ENCODE measurements at regions of chr4 and their contacts with region 1.

Region 1: GRCh38 chr4:169485791-169486742 is 126.3 kb downstream of the NEK1 start:
- DNase-seq: peak; percentile 68
- ATAC-seq: peak; percentile 68
- H3K4me3 ChIP-seq: no peak overlapping the region
- H3K27ac ChIP-seq: no peak overlapping the region
- H3K4me1 ChIP-seq: 0 out of 2 replicates have a peak, but pooled peaks cover 5% of the 10 kb centered on the region
- H3K27me3 ChIP-seq: no peaks in the 10 kb centered on the region
- CTCF ChIP-seq: peak; percentile 43 to 82 (median 67); a peak in 5 of 6 replicates
- EP300 ChIP-seq: no peak
- POLR2A ChIP-seq: no peak
- RAD21 ChIP-seq: peak; percentile 97

Region 2: GRCh38 chr4:168917138-168917779 is 568.8 kb before region 1 on chr4:
- CTCF ChIA-PET with region 1: interaction called, 60 read pairs
- POLR2A ChIA-PET with region 1: no interaction called
- RAD21 ChIA-PET with region 1: interaction called, 32 read pairs
- SMC1A ChIA-PET with region 1: interaction called, 53 read pairs
- in situ Hi-C with region 1: loop called (anchors 5 kb)
- intact Hi-C with region 1: no loop called
- DNase-seq: no peak
- ATAC-seq: peak; percentile 80
- H3K4me3 ChIP-seq: no peak overlapping the region
- H3K27ac ChIP-seq: no peak overlapping the region
- H3K4me1 ChIP-seq: no peaks in the 10 kb centered on the region
- H3K27me3 ChIP-seq: no peaks in the 10 kb centered on the region
- CTCF ChIP-seq: peak; percentile 37 to 52 (median 41); a peak in 4 of 6 replicates
- EP300 ChIP-seq: no peak
- POLR2A ChIP-seq: no peak
- RAD21 ChIP-seq: peak; percentile 69

Region 3: DNA sequence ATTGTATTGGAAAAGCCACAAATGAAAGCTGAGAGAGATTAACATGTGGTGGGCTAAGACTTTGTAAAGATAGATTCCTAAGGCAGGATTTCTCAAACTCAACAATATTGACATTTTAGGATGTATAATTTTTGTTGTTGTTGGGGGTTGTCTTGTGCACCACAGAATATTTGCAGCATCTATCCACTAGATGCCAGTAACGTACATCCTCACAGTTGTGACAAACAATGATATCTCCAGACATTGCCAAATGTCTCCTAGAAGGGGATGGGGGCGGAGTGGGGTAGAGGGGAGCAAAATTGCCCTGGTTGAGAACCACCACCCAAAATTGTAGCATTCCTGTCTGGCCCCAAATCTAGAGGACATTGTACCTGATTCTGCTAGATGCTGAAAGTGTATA is 461.3 kb before region 1 on chr4:
- CTCF ChIA-PET with region 1: interaction called, 64 read pairs
- POLR2A ChIA-PET with region 1: no interaction called
- RAD21 ChIA-PET with region 1: interaction called, 42 read pairs
- SMC1A ChIA-PET with region 1: interaction called, 70 read pairs
- in situ Hi-C with region 1: no loop called
- intact Hi-C with region 1: loop called (anchors 1 kb)
- DNase-seq: no peak
- ATAC-seq: peak; percentile 97
- H3K4me3 ChIP-seq: no peak overlapping the region
- H3K27ac ChIP-seq: no peak overlapping the region
- H3K4me1 ChIP-seq: no peaks in the 10 kb centered on the region
- H3K27me3 ChIP-seq: no peaks in the 10 kb centered on the region
- CTCF ChIP-seq: peak; percentile 63 to 77 (median 65)
- EP300 ChIP-seq: no peak
- POLR2A ChIP-seq: no peak
- RAD21 ChIP-seq: peak; percentile 94

Region 4: GRCh38 chr4:169201222-169202144 is 284.6 kb before region 1 on chr4:
- CTCF ChIA-PET with region 1: interaction called, 8 read pairs
- POLR2A ChIA-PET with region 1: no interaction called
- RAD21 ChIA-PET with region 1: interaction called, 5 read pairs
- SMC1A ChIA-PET with region 1: interaction called, 16 read pairs
- in situ Hi-C with region 1: no loop called
- intact Hi-C with region 1: no loop called
- DNase-seq: no peak
- ATAC-seq: peak; percentile 41
- H3K4me3 ChIP-seq: no peak overlapping the region
- H3K27ac ChIP-seq: no peak overlapping the region; the same call in 1 of the 2 replicates
- H3K4me1 ChIP-seq: no peaks in the 10 kb centered on the region
- H3K27me3 ChIP-seq: no peaks in the 10 kb centered on the region
- CTCF ChIP-seq: no peak
- EP300 ChIP-seq: no peak
- POLR2A ChIP-seq: no peak
- RAD21 ChIP-seq: no peak

Region 5: GRCh38 chr4:169398316-169398715 is 87.8 kb before region 1 on chr4:
- CTCF ChIA-PET with region 1: interaction called, 10 read pairs
- POLR2A ChIA-PET with region 1: no interaction called
- RAD21 ChIA-PET with region 1: interaction called, 7 read pairs
- SMC1A ChIA-PET with region 1: interaction called, 3 read pairs
- in situ Hi-C with region 1: no loop called
- intact Hi-C with region 1: no loop called
- DNase-seq: no peak
- ATAC-seq: peak; percentile 5; the same call in 2 of the 3 replicates
- H3K4me3 ChIP-seq: no peak overlapping the region
- H3K27ac ChIP-seq: no peak overlapping the region
- H3K4me1 ChIP-seq: peaks cover 13% of the 10 kb centered on the region
- H3K27me3 ChIP-seq: no peaks in the 10 kb centered on the region
- CTCF ChIP-seq: no peak
- EP300 ChIP-seq: no peak
- POLR2A ChIP-seq: no peak
- RAD21 ChIP-seq: no peak

Region 6: GRCh38 chr4:169566021-169566818 is 80.2 kb after region 1 on chr4:
- CTCF ChIA-PET with region 1: interaction called, 9 read pairs
- POLR2A ChIA-PET with region 1: no interaction called
- RAD21 ChIA-PET with region 1: no interaction called
- SMC1A ChIA-PET with region 1: interaction called, 5 read pairs
- in situ Hi-C with region 1: no loop called
- intact Hi-C with region 1: loop called (anchors 5 kb)
- DNase-seq: no peak
- ATAC-seq: peak; percentile 92
- H3K4me3 ChIP-seq: no peak overlapping the region
- H3K27ac ChIP-seq: no peak overlapping the region
- H3K4me1 ChIP-seq: no peaks in the 10 kb centered on the region
- H3K27me3 ChIP-seq: no peaks in the 10 kb centered on the region
- CTCF ChIP-seq: peak; percentile 47 to 69 (median 61); a peak in 5 of 6 replicates
- EP300 ChIP-seq: no peak
- POLR2A ChIP-seq: no peak
- RAD21 ChIP-seq: peak; percentile 73

Region 7: DNA sequence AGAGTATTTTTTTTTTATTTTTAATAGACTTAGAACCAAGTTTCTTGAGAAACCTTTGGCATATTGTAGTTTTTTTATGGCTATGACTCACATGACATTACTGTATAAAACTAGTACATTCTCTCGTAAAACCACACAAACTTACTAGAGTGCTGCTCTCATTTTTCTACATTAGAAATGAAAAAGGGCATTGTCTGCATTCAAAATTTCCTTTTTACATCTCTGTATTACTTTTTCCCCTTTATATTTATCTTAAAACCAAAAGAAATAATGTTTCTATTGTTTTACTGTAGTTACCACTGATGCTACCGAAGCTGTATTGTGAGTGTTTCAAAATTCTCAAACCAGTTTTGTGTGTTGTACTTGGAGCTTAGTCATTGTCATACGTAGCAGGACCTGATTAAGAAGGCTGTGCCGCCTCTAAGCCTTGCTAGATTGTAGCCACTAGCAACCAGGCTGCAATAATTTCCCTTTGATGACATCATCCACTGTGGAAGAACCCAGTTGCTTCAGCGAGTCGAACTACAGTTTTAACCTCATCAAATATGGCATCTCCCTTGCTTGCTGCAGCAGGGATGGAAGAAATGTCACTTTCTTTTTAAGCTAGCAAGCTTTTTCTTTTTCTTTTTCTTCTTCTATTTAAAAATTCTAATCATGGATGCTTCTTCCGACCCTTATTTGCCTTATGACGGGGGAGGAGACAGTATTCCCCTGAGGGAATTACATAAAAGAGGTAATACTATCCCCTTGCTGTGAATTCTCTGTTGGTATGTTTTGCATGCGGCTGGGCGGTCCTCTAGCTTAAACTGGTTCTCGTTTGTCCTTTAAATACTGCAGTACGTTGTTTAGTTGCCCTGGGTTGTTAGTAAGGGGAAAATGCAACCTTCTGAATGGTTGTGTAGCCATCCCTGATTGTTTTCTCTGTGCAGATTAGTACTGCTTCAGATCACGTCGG is 173.9 kb after region 1 on chr4:
- CTCF ChIA-PET with region 1: no interaction called
- POLR2A ChIA-PET with region 1: no interaction called
- RAD21 ChIA-PET with region 1: no interaction called
- SMC1A ChIA-PET with region 1: no interaction called
- in situ Hi-C with region 1: no loop called
- intact Hi-C with region 1: no loop called
- DNase-seq: peak; percentile 74
- ATAC-seq: peak; percentile 98
- H3K4me3 ChIP-seq: peak overlapping the region; percentile 56
- H3K27ac ChIP-seq: peak overlapping the region; percentile 78
- H3K4me1 ChIP-seq: peaks cover 3% of the 10 kb centered on the region
- H3K27me3 ChIP-seq: no peaks in the 10 kb centered on the region
- CTCF ChIP-seq: no peak
- EP300 ChIP-seq: no peak
- POLR2A ChIP-seq: 0 out of 2 replicates have a peak, but pooled peaks have one; percentile 36
- RAD21 ChIP-seq: no peak

Region 8: DNA sequence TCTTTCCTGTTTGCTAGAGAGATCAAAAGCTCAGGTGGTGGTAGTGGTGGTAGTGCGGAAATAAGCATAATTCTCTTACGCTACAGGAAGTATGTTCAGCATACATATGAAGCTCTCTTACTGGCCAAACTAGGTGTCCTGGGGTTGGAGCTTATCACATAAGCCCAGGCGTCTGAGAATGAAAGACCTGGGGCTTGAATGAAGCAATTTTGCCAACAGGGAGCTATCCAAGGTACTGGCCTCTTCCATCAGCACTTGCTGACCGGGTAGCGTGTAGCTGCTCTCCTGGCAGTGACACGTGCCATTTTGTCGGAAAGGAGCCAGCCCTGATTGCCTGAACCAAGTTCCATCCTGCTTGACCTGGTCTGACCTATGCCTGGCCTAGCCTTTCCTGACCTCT is 337.6 kb after region 1 on chr4:
- CTCF ChIA-PET with region 1: no interaction called
- POLR2A ChIA-PET with region 1: no interaction called
- RAD21 ChIA-PET with region 1: no interaction called
- SMC1A ChIA-PET with region 1: no interaction called
- in situ Hi-C with region 1: no loop called
- intact Hi-C with region 1: no loop called
- DNase-seq: no peak
- ATAC-seq: peak; percentile 59
- H3K4me3 ChIP-seq: no peak overlapping the region
- H3K27ac ChIP-seq: no peak overlapping the region
- H3K4me1 ChIP-seq: no peaks in the 10 kb centered on the region
- H3K27me3 ChIP-seq: no peaks in the 10 kb centered on the region
- CTCF ChIP-seq: no peak
- EP300 ChIP-seq: no peak
- POLR2A ChIP-seq: no peak
- RAD21 ChIP-seq: no peak

Measured in GM12878 (cell line).